Activated CD8-positive, alpha-beta T cell treated with anti-CD3 and anti-CD28 coated beads for 36 hours (primary cell): ENCODE measurements at regions of chr12 and their contacts with region 1.

Region 1: DNA sequence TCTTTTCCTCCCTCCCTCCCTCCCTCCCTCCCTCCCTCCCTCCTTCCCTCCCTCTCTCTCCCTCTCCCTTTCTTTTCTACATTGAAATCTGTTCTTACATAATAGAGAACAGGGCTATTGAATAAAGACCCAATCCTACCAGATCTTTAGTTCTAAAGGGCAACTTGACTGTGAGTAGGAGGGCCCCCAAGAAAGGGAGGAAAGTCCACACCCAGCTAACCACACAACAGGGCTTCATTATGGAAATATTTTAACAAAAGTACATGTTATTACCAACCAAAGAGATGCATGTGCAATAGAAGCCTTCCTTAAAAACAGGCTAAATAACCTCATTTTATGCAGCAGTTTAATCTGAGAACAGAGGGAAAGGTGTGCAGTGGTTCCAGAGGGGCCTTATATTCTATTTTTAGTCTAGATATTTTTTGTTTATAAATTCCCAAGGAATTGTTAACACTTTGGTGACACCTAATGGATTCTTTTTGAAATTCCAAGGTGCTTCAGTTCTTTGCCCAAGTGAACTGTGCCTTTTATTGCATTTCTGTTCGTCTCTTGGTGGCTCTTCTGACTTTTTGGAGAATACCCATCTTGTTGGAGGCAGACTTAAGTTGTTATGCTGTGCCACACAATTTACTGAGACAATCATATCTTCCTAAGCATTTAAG is 63.0 kb downstream of the GNS start:
- DNase-seq: no peak
- ATAC-seq: no peak
- H3K4me3 Mint-ChIP-seq: no peak overlapping the region
- H3K27ac Mint-ChIP-seq: peak overlapping the region; percentile 50
- H3K4me1 Mint-ChIP-seq: peaks cover 80% of the 10 kb centered on the region
- H3K27me3 Mint-ChIP-seq: no peaks in the 10 kb centered on the region
- CTCF ChIP-seq: no peak

Region 2: DNA sequence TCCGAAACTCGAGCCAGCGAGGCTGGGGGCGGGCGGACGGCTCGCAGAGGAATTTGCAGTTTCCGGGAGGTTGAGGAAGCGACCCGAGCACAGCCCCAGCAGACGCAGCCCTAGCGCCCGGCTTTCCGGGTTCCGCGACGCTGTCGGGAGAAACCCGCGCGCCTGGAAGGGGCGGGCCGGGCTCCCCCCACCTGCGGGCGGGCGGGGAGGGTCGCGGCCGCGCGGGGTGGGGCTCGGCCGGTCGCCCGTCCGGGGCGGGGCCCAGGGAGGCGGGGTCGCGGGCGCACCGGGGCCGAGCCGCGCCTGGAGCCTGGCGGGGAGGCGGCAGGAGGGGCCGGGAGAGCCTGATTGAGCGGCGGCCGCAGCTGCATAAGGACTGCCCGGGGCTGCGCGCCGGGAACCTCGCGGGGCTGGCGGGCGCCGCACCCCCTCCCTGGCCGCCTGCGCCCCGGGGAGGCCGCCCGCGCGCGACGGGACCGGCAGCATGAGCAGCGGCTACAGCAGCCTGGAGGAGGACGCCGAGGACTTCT is 86.0 kb before region 1 on chr12 and contains the start of gene RASSF3:
- CTCF ChIA-PET with region 1: interaction called, 21 read pairs
- POLR2A ChIA-PET with region 1: interaction called, 6 read pairs
- intact Hi-C with region 1: no loop called
- DNase-seq: peak; percentile 77
- ATAC-seq: peak; percentile 65
- H3K4me3 Mint-ChIP-seq: peak within 1 kb of the TSS; percentile 96
- H3K27ac Mint-ChIP-seq: peak within 1 kb of the TSS; percentile 96
- H3K4me1 Mint-ChIP-seq: peaks cover 34% of the 10 kb centered on the region
- H3K27me3 Mint-ChIP-seq: no peaks in the 10 kb centered on the region
- CTCF ChIP-seq: no peak
- total RNA-seq, gene RASSF3: 40.4 to 41.6 TPM

Region 3: GRCh38 chr12:64679487-64679983 is 16.7 kb before region 1 on chr12:
- CTCF ChIA-PET with region 1: interaction called, 29 read pairs
- POLR2A ChIA-PET with region 1: interaction called, 3 read pairs
- intact Hi-C with region 1: no loop called
- DNase-seq: peak; percentile 83
- ATAC-seq: peak; percentile 68
- H3K4me3 Mint-ChIP-seq: peak overlapping the region; percentile 54
- H3K27ac Mint-ChIP-seq: peak overlapping the region; percentile 88
- H3K4me1 Mint-ChIP-seq: peaks cover 89% of the 10 kb centered on the region
- H3K27me3 Mint-ChIP-seq: no peaks in the 10 kb centered on the region
- CTCF ChIP-seq: no peak

Region 4: DNA sequence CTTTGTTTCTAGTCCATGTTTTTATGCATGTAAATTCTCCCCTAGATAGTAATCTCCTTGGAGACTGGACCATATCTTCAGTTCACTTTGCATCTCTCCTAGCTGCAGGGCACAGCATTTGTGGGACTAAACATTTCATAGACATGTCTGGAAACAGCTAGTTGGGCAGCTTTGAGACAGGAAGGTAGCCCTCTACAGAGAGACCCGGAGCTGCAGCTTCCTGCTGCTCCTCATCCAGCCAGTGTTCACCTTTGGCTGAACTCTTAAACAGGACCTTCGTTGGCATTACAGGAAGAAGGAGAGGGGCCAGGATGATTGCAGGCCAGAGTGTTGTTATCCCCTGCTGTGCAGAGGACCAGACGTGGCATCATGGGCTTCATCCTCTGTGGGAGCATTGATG is 10.1 kb after region 1 on chr12:
- CTCF ChIA-PET with region 1: interaction called, 12 read pairs
- POLR2A ChIA-PET with region 1: interaction called, 4 read pairs
- intact Hi-C with region 1: no loop called
- DNase-seq: no peak
- ATAC-seq: no peak
- H3K4me3 Mint-ChIP-seq: no peak overlapping the region
- H3K27ac Mint-ChIP-seq: no peak overlapping the region
- H3K4me1 Mint-ChIP-seq: peaks cover 11% of the 10 kb centered on the region
- H3K27me3 Mint-ChIP-seq: no peaks in the 10 kb centered on the region
- CTCF ChIP-seq: no peak

Region 5: GRCh38 chr12:64713376-64713775 is 17.2 kb after region 1 on chr12:
- CTCF ChIA-PET with region 1: interaction called, 12 read pairs
- POLR2A ChIA-PET with region 1: no interaction called
- intact Hi-C with region 1: no loop called
- DNase-seq: no peak
- ATAC-seq: no peak
- H3K4me3 Mint-ChIP-seq: no peak overlapping the region
- H3K27ac Mint-ChIP-seq: peak overlapping the region; percentile 40
- H3K4me1 Mint-ChIP-seq: peaks cover 24% of the 10 kb centered on the region
- H3K27me3 Mint-ChIP-seq: no peaks in the 10 kb centered on the region
- CTCF ChIP-seq: no peak

Region 6: DNA sequence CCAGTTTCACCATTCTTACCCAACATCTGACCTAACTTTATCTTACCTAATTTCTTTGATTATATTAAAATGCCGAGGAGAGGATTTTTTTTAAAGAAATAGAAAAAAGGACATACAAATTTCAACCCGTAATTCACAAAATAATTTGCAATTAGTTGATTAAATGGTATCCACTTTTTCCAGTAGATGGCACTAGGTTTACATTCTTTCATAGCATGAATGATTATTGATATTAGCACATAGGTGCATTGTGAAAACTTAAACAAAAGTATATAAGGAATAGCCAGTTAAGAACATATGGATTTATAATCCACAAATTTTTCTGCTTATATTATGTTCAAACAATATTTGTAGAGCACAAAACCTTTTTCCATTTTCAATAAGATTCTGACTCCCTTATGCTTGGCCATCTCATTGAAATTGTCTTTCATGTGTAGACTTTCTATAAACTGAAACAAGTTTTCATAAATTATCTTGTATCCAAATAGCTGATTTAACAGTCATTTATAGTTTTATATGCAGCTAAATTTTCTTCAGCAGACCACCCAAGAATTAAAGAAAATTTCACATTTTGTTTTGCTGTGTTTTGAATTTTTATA is 617.6 kb after region 1 on chr12:
- CTCF ChIA-PET with region 1: no interaction called
- POLR2A ChIA-PET with region 1: no interaction called
- intact Hi-C with region 1: no loop called
- DNase-seq: no peak
- ATAC-seq: no peak
- H3K4me3 Mint-ChIP-seq: no peak overlapping the region
- H3K27ac Mint-ChIP-seq: no peak overlapping the region
- H3K4me1 Mint-ChIP-seq: no peaks in the 10 kb centered on the region
- H3K27me3 Mint-ChIP-seq: no peaks in the 10 kb centered on the region
- CTCF ChIP-seq: no peak